Natural killer cell (primary cell): ENCODE measurements at regions of chr22 and their contacts with region 1.

Region 1: DNA sequence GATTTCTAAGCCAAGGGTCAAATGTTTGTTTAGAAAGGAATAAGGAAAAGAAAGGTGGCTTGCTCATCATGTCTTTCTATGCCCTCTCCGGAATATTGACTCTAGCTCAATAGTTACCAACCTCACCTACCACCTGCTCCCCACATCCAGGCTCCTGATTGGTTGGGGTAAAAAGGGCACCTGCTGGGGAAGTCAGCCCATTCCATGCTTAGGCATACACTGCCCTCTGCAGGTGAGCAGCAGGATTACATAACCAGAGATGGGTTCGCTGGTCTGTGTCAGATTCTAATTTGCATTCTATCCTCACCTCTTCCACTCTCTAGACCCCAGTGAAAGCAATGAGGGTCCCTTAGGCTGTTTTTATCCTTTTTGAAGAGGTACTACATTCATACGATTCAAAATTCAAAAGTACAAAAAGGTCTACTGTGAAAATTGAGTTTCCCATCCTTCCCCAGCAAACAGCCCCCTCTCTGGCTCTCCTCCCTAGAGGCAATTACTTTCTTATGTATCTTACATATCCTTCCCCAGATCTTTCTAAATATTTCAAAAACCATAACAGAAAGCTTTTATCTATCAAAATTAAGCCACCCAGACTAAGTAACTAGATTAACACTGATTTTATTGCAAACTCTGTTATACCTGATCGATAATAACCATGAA is 98.0 kb upstream of the ASPHD2 start:
- DNase-seq: peak in 1 of 2 donors; percentile 76
- ATAC-seq: peak; percentile 58 to 87 (median 67)
- H3K4me3 ChIP-seq: no peak overlapping the region
- H3K4me3 Mint-ChIP-seq: no peak overlapping the region
- H3K27ac ChIP-seq: no peak overlapping the region
- H3K27ac Mint-ChIP-seq: no peak overlapping the region
- H3K4me1 ChIP-seq: no peaks in the 10 kb centered on the region
- H3K4me1 Mint-ChIP-seq: no peaks in the 10 kb centered on the region
- H3K27me3 ChIP-seq: no peaks in the 10 kb centered on the region
- H3K27me3 Mint-ChIP-seq: peaks cover 15 to 28% of the 10 kb centered on the region in 2 donors
- CTCF ChIP-seq: peak; percentile 69

Region 2: GRCh38 chr22:25362215-25362882 is 968.7 kb before region 1 on chr22:
- intact Hi-C with region 1: loop called (anchors 5 kb)
- DNase-seq: peak; percentile 55 to 75
- ATAC-seq: peak; percentile 57 to 81 (median 59)
- H3K4me3 ChIP-seq: no peak overlapping the region
- H3K4me3 Mint-ChIP-seq: no peak overlapping the region
- H3K27ac ChIP-seq: no peak overlapping the region
- H3K27ac Mint-ChIP-seq: peak overlapping the region in 1 of 2 donors; percentile 31
- H3K4me1 ChIP-seq: peaks cover 5% of the 10 kb centered on the region
- H3K4me1 Mint-ChIP-seq: peaks cover 18 to 26% of the 10 kb centered on the region in 2 donors
- H3K27me3 ChIP-seq: no peaks in the 10 kb centered on the region
- H3K27me3 Mint-ChIP-seq: no peaks in the 10 kb centered on the region
- CTCF ChIP-seq: peak; percentile 93

Region 3: GRCh38 chr22:25447686-25448434 is 883.2 kb before region 1 on chr22:
- intact Hi-C with region 1: loop called (anchors 2 kb)
- DNase-seq: peak; percentile 90 to 95
- ATAC-seq: peak; percentile 94 to 96 (median 96)
- H3K4me3 ChIP-seq: peak overlapping the region; percentile 69
- H3K4me3 Mint-ChIP-seq: peak overlapping the region; percentile 99
- H3K27ac ChIP-seq: peak overlapping the region; percentile 50
- H3K27ac Mint-ChIP-seq: peak overlapping the region; percentile 93 to 94
- H3K4me1 ChIP-seq: peaks cover 8% of the 10 kb centered on the region
- H3K4me1 Mint-ChIP-seq: peaks cover 32 to 50% of the 10 kb centered on the region in 2 donors
- H3K27me3 ChIP-seq: no peaks in the 10 kb centered on the region
- H3K27me3 Mint-ChIP-seq: no peaks in the 10 kb centered on the region
- CTCF ChIP-seq: peak; percentile 86